GM10248 (cell line): ENCODE measurements at regions of chr3 and their contacts with region 1.

Region 1: GRCh38 chr3:27721717-27722542 is at the start of gene EOMES:
- DNase-seq: peak; percentile 64
- CTCF ChIP-seq: peak; percentile 32

Region 2: GRCh38 chr3:28139967-28140634 is 418.2 kb after region 1 on chr3:
- CTCF ChIA-PET with region 1: no interaction called
- POLR2A ChIA-PET with region 1: interaction called, 12 read pairs
- DNase-seq: no peak
- CTCF ChIP-seq: no peak